MCF 10A (cell line): ENCODE measurements at regions of chr19 and their contacts with region 1.

Region 1: DNA sequence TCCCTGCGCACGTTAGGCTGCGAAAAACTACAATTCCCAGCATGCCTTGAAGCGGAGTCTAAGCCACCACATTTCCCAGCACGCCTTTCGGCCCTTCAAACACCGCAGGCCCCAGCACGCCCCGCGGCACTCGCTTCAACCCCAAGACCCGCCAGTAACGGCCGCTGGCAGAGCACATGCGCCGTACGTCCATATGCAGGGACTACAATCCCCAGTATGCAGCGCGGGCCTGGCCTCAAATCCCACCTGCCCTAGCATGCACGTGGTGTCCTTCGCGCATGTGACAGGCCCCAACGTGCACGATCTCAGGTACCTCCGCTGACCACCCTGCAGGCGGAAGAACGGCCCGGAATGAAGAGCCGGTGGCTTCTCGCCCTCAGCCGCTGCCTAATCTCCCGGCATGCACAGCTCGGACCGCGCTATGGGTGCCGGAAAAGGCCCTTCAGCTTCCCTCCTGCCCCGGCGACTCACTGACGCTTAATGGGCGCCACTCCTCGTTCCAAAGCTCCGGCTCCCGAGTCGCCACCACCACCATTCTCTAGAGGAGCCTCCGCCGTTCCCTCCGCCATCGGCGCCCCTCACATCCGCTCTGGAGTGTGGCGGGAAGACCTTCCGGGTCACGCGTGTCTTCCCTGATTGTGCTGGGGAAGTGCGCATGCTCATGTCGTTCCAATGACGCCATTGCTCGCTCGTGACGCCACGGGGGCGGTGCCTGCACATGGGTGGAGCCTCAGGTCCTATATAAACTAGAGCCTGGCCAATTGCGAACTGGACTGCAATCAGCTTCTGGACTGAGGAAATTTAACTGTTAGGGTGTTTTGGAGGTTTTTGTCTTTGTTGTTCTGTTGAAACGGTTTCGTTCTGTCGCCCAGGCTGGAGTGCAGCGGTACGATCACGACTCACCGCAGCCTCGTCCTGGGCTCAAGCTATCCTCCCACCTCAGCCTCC is at the start of gene DUS3L:
- DNase-seq: peak; percentile 98
- H3K4me3 Mint-ChIP-seq: peak within 1 kb of the TSS; percentile 98
- H3K27ac Mint-ChIP-seq: peak within 1 kb of the TSS; percentile 100
- H3K4me1 Mint-ChIP-seq: peaks cover 14% of the 10 kb centered on the region
- H3K27me3 Mint-ChIP-seq: no peaks in the 10 kb centered on the region
- CTCF ChIP-seq: no peak
- total RNA-seq, gene DUS3L: 53.5 and 77.6 TPM in 2 replicates

Region 2: GRCh38 chr19:5775668-5776309 is 15.1 kb before region 1 on chr19:
- CTCF ChIA-PET with region 1: interaction called, 29 read pairs
- POLR2A ChIA-PET with region 1: no interaction called
- intact Hi-C with region 1: loop called (anchors 1 kb)
- DNase-seq: peak; percentile 53
- H3K4me3 Mint-ChIP-seq: no peak overlapping the region
- H3K27ac Mint-ChIP-seq: no peak overlapping the region
- H3K4me1 Mint-ChIP-seq: peaks cover 5% of the 10 kb centered on the region
- H3K27me3 Mint-ChIP-seq: no peaks in the 10 kb centered on the region
- CTCF ChIP-seq: no peak

Region 3: DNA sequence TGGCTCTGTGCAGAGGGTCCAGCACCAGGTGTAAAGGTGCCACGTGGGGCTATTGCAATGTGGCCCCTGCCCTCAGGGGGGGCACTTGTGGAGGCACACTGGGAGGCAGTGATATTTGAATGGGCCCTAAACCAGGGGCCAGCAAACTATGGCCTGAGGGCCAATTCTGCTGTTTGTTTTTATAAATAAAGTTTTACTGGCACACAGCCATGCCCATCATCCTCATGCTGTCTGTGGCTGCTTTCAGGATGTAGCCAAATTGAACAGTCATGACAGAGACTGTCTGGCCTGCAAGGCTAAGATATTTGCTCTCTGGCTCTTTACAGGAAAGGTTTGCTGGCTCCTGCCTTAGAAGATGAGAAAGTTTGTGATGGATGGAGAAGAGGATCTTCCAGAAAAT is 220.9 kb after region 1 on chr19:
- CTCF ChIA-PET with region 1: no interaction called
- POLR2A ChIA-PET with region 1: no interaction called
- intact Hi-C with region 1: no loop called
- DNase-seq: no peak
- H3K4me3 Mint-ChIP-seq: no peak overlapping the region
- H3K27ac Mint-ChIP-seq: no peak overlapping the region
- H3K4me1 Mint-ChIP-seq: no peaks in the 10 kb centered on the region
- H3K27me3 Mint-ChIP-seq: no peaks in the 10 kb centered on the region
- CTCF ChIP-seq: no peak